B cell (primary cell): ENCODE measurements at regions of chr12 and their contacts with region 1.

Region 1: GRCh38 chr12:53451661-53452158 is at the start of gene PCBP2:
- DNase-seq: peak; percentile 98
- ATAC-seq: peak; percentile 90
- H3K4me3 ChIP-seq: peak within 1 kb of the TSS; percentile 67 to 92 (median 85)
- H3K4me3 Mint-ChIP-seq: peak within 1 kb of the TSS; percentile 97
- H3K27ac ChIP-seq: peak within 1 kb of the TSS; percentile 90 to 94
- H3K27ac Mint-ChIP-seq: peak within 1 kb of the TSS; percentile 99
- H3K4me1 ChIP-seq: peaks cover 15 to 20% of the 10 kb centered on the region in 2 donors
- H3K4me1 Mint-ChIP-seq: peaks cover 27% of the 10 kb centered on the region
- H3K27me3 ChIP-seq: no peaks in the 10 kb centered on the region
- H3K27me3 Mint-ChIP-seq: no peaks in the 10 kb centered on the region
- CTCF ChIP-seq: peak; percentile 84
- total RNA-seq, gene PCBP2: 916 and 944 TPM in 2 replicates

Region 2: DNA sequence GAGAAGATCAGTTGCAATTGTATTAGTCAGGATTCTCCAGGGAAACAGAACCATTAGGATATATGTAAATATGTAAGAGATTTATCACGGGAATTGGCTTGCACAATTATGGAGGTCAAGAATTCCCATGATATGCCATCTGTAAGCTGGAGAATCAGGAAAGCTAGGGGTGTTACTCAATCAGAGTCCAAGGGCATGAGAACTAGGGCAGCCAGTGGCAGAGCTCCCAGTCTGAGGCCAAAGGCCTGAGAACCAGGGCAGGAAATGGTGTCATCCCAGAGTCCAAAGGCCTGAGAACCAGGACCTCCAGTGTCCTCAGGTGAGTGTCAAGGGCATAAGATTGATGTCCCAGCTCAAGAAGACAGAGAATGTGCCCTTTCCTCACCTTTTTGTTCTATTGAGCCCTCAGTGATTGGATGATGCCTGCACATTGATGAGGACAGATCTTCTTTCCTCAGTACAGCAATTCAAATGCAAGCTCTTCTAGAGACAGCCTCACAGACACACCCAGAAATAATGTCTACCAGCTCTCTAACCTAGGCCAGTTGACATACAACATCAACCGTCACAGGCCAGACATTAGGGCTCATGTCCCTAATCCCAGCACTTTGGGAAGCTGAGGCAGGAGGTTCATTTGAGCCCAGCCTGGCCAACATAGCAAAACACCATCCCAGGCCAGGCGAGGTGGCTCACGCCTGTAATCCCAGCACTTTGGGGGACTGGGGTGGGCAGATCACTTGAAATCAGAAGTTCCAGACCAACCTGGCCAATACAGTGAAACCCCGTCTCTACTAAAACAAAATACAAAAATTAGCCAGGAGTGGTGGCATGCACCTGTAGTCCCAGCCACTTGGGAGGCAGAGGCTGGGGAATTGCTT is 306.1 kb before region 1 on chr12:
- CTCF ChIA-PET with region 1: no interaction called
- POLR2A ChIA-PET with region 1: no interaction called
- intact Hi-C with region 1: no loop called
- DNase-seq: no peak
- ATAC-seq: no peak
- H3K4me3 ChIP-seq: no peak overlapping the region
- H3K4me3 Mint-ChIP-seq: no peak overlapping the region
- H3K27ac ChIP-seq: no peak overlapping the region
- H3K27ac Mint-ChIP-seq: no peak overlapping the region
- H3K4me1 ChIP-seq: no peaks in the 10 kb centered on the region
- H3K4me1 Mint-ChIP-seq: no peaks in the 10 kb centered on the region
- H3K27me3 ChIP-seq: no peaks in the 10 kb centered on the region
- H3K27me3 Mint-ChIP-seq: peaks cover 9% of the 10 kb centered on the region
- CTCF ChIP-seq: no peak

Region 3: DNA sequence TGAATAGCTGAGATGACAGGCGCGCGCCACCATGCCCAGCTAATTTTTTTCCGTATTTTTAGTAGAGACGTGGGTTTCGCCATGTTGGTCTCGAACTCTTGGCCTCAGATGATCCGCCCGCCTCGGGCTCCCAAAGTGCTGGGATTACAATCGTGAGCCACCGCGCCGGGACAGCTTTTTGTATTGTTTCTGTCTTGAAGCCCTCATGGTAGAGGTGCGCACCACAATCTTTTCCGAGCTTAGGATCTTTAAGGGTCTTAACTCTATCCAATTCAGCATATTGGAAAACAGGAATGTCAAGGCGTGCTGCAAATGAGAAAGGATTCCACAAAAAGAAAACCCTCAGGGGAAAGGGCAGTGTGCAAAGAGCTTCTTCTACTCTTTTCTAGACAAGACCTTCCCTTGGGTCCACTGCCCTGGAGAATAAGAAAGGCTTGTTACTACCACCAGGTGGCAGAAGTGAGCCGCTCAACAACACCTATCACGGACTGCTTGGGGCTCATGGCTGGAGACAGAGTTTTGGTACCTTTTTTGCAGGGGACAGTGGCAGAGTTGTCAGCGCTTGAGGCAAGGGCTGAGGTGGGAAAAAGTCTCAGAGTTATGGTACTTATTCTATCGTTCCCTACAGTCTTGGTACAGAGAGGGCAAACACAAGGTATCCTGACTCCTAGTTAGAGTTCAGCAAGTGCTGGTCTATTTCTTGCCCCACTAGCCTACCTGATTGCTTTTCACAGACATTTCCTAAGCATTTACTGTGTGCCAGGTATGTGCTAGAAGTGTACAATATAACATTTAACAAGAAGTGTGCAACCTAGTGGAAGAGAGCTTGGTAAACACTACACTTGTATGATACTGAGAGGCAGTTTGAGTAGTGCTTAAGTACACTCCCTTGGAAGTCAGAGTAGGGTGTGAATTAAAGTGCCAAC is 99.1 kb before region 1 on chr12:
- CTCF ChIA-PET with region 1: no interaction called
- POLR2A ChIA-PET with region 1: interaction called, 3 read pairs
- intact Hi-C with region 1: loop called (anchors 1 kb)
- DNase-seq: peak; percentile 91
- ATAC-seq: peak; percentile 100
- H3K4me3 ChIP-seq: no peak overlapping the region
- H3K4me3 Mint-ChIP-seq: no peak overlapping the region
- H3K27ac ChIP-seq: no peak overlapping the region
- H3K27ac Mint-ChIP-seq: peak overlapping the region; percentile 61
- H3K4me1 ChIP-seq: peaks cover 4 to 5% of the 10 kb centered on the region in 2 donors
- H3K4me1 Mint-ChIP-seq: peaks cover 6% of the 10 kb centered on the region
- H3K27me3 ChIP-seq: no peaks in the 10 kb centered on the region
- H3K27me3 Mint-ChIP-seq: no peaks in the 10 kb centered on the region
- CTCF ChIP-seq: peak; percentile 87

Region 4: GRCh38 chr12:53391729-53392128 is 60.0 kb before region 1 on chr12:
- CTCF ChIA-PET with region 1: no interaction called
- POLR2A ChIA-PET with region 1: no interaction called
- intact Hi-C with region 1: no loop called
- DNase-seq: no peak
- ATAC-seq: no peak
- H3K4me3 ChIP-seq: no peak overlapping the region
- H3K4me3 Mint-ChIP-seq: no peak overlapping the region
- H3K27ac ChIP-seq: no peak overlapping the region
- H3K27ac Mint-ChIP-seq: no peak overlapping the region
- H3K4me1 ChIP-seq: peaks cover 14 to 25% of the 10 kb centered on the region in 2 donors
- H3K4me1 Mint-ChIP-seq: peaks cover 40% of the 10 kb centered on the region
- H3K27me3 ChIP-seq: no peaks in the 10 kb centered on the region
- H3K27me3 Mint-ChIP-seq: no peaks in the 10 kb centered on the region
- CTCF ChIP-seq: no peak

Region 5: GRCh38 chr12:53414756-53415417 is 36.8 kb before region 1 on chr12:
- CTCF ChIA-PET with region 1: interaction called, 3 read pairs
- POLR2A ChIA-PET with region 1: no interaction called
- intact Hi-C with region 1: loop called (anchors 1 kb)
- DNase-seq: no peak
- ATAC-seq: no peak
- H3K4me3 ChIP-seq: no peak overlapping the region
- H3K4me3 Mint-ChIP-seq: no peak overlapping the region
- H3K27ac ChIP-seq: no peak overlapping the region
- H3K27ac Mint-ChIP-seq: peak overlapping the region; percentile 46
- H3K4me1 ChIP-seq: peaks cover 24 to 29% of the 10 kb centered on the region in 2 donors
- H3K4me1 Mint-ChIP-seq: peaks cover 57% of the 10 kb centered on the region
- H3K27me3 ChIP-seq: no peaks in the 10 kb centered on the region
- H3K27me3 Mint-ChIP-seq: no peaks in the 10 kb centered on the region
- CTCF ChIP-seq: no peak

Region 6: DNA sequence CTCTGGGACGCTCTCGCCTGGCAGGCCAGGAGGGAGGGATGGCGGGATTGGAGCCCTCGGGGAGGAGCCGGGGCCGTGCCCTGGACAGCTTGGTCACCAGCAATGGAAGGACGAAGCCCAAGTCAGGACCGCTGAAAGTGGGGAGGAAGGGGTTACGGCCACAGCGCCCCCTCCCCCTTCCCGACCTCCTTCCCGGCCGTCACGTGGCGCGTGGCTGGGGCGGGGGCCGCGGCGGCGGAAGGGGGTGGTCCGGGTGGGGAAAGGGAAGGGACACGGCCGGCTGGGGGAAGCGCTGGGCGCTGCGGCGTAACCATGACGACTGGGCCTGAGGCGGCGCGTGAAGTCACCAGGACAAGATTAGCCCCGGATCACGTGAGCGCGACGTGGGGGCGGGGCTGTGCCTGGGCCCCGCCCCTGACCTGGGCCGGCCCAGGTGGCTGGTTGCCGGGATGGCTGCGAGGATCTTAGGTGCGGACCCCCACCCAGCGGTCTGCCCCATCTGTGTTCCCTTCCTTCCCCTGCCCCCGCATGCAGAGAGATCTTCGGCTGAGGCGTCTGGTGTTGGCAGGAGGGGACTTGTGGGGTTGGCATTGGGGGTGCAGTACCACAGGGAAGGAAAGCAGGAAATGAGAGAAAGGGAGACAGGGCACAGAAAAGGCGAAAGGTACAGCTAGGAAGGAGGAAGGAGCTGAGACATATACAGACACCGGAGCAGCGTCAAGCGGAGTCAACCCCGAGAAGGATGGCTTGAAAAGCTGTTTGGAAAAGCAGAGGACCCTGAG is 41.3 kb after region 1 on chr12:
- CTCF ChIA-PET with region 1: interaction called, 4 read pairs
- POLR2A ChIA-PET with region 1: interaction called, 5 read pairs
- intact Hi-C with region 1: loop called (anchors 2 kb)
- DNase-seq: peak; percentile 95
- ATAC-seq: peak; percentile 95
- H3K4me3 ChIP-seq: peak overlapping the region; percentile 51 to 68 (median 61)
- H3K4me3 Mint-ChIP-seq: peak overlapping the region; percentile 98
- H3K27ac ChIP-seq: peak overlapping the region; percentile 84 to 90
- H3K27ac Mint-ChIP-seq: peak overlapping the region; percentile 96
- H3K4me1 ChIP-seq: peaks cover 16 to 21% of the 10 kb centered on the region in 2 donors
- H3K4me1 Mint-ChIP-seq: peaks cover 23% of the 10 kb centered on the region
- H3K27me3 ChIP-seq: no peaks in the 10 kb centered on the region
- H3K27me3 Mint-ChIP-seq: no peaks in the 10 kb centered on the region
- CTCF ChIP-seq: no peak

Region 7: DNA sequence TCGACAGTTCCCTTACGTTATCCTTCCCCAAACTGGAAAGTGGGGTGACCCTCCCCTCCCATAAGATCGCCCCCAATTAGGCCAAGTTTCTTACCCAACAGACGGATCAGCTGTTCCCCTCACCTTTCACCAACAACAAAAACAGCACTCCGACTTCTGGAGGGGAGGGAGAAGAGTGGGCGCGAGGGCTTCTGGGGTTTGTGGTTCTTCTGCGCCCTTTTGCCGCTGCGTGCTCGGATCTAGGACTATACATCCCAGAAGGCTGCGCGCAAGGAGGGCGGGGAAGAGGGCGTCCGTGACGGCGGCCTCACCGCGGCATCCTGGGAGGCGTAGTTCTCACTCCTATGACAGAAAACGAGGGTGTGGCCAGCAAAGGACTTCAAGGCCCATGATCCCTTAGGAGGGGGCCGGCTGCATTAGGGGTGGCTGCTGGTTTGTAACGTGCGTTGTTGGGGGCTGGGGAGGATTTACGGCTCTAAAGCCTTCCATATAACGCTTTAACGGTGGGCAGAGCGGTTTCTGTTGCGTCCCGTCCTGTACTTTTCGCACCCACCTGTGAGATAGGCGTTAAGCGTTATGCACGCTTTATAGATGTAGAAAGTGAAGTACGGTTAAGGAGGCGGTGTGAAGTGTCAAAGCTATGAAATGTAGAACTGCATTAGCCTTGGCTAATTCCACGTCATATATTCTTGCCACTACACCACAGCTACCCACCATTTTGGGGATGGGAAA is 275.8 kb after region 1 on chr12 and contains the start of gene CALCOCO1:
- CTCF ChIA-PET with region 1: no interaction called
- POLR2A ChIA-PET with region 1: no interaction called
- intact Hi-C with region 1: loop called (anchors 5 kb)
- DNase-seq: peak; percentile 98
- ATAC-seq: peak; percentile 97
- H3K4me3 ChIP-seq: peak within 1 kb of the TSS; percentile 51 to 96 (median 85)
- H3K4me3 Mint-ChIP-seq: peak within 1 kb of the TSS; percentile 91
- H3K27ac ChIP-seq: peak within 1 kb of the TSS; percentile 60 to 61
- H3K27ac Mint-ChIP-seq: peak within 1 kb of the TSS; percentile 82
- H3K4me1 ChIP-seq: peaks cover 13 to 21% of the 10 kb centered on the region in 2 donors
- H3K4me1 Mint-ChIP-seq: peaks cover 22% of the 10 kb centered on the region
- H3K27me3 ChIP-seq: no peaks in the 10 kb centered on the region
- H3K27me3 Mint-ChIP-seq: peaks cover 11% of the 10 kb centered on the region
- CTCF ChIP-seq: no peak
- total RNA-seq, gene CALCOCO1: 171 and 179 TPM in 2 replicates